Adrenal gland (tissue), 19 donors: ENCODE measurements at regions of chr22 and their contacts with region 1.

Region 1: DNA sequence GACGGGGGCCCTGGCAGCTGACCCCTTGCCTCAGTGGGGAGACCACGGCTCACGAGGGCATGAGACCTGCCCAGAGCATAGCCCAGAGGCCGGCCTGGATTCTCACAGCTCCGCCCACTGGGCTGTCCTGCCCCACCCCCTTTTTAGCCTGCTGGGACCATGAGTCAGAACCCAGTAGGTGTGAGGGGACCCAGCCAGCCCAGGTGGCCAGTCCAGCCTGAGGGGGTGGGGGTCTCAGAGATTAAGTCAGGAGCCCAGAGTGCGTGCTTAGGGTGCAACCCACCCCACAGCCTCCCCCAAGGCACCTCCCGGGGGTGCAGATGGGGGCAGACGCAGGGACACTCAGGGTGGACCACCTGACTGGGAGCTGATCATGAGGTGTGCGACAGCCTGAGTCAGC is 40.1 kb upstream of the PPARA start:
- DNase-seq: peak; percentile 82 to 87 (median 86)
- H3K4me3 ChIP-seq: no peak overlapping the region
- H3K27ac ChIP-seq: peak overlapping the region; percentile 73 to 95 (median 85)
- H3K4me1 ChIP-seq: peaks cover 66 to 99% of the 10 kb centered on the region in 2 donors
- H3K27me3 ChIP-seq: no peaks in the 10 kb centered on the region
- CTCF ChIP-seq: no peak
- POLR2A ChIP-seq: peak in 1 of 2 donors; percentile 27

Region 2: GRCh38 chr22:46079861-46080821 is 30.1 kb before region 1 on chr22:
- intact Hi-C with region 1: loop called in 1 of 2 experiments (anchors 5 kb)
- DNase-seq: peak in 6 of 7 donors; percentile 82 to 89 (median 84)
- H3K4me3 ChIP-seq: peak overlapping the region in 2 of 4 donors; percentile 15 to 58
- H3K27ac ChIP-seq: peak overlapping the region; percentile 80 to 98 (median 97)
- H3K4me1 ChIP-seq: peaks cover 78 to 96% of the 10 kb centered on the region in 2 donors
- H3K27me3 ChIP-seq: no peaks in the 10 kb centered on the region
- CTCF ChIP-seq: no peak
- POLR2A ChIP-seq: peak; percentile 46 to 69